Transverse colon (tissue), 4 donors: ENCODE measurements at regions of chr5 and their contacts with region 1.

Region 1: DNA sequence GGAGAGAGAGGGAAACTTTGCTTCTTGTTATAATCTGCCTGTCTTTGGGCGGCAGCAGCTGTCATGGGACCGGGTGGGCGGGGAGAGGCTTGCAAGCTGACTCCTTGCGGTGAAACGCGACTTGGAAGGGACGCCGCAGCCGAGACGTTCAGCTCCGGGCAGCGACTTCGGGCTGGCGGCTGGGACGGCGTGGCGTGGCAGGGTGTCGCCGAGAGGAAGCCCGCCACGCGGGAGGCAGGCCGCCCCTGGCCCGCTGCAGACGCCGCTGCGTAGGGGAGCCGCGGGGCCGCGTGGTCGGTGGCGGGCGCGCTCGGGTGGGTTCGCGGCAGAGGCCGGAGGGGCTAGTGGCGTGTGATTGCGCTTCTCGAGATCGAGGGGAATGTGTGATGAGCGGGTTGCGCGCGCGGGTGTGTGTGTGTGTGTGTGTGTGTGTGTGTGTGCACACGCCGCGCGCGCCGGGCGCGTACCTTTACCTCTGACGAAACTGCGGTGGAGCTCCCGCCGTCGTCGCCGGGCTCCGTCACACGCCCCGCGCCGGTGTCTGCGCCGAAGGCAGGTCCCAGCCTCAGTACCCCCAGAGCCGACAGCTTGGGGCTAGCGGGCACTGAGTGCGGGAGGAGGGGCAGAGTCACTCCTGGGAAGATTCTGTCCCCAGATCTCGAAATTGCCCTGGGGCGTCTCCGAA is 1.7 kb downstream of the PPARGC1B start:
- DNase-seq: peak; percentile 91
- H3K4me3 ChIP-seq: peak overlapping the region; percentile 86 to 98 (median 97)
- H3K27ac ChIP-seq: peak overlapping the region; percentile 92 to 99 (median 96)
- H3K4me1 ChIP-seq: peaks cover 10 to 54% (median 33%) of the 10 kb centered on the region in 4 donors
- H3K27me3 ChIP-seq: no peaks in the 10 kb centered on the region
- CTCF ChIP-seq: peak in 1 of 5 experiments; percentile 26
- EP300 ChIP-seq: no peak
- POLR2A ChIP-seq: peak; percentile 47

Region 2: DNA sequence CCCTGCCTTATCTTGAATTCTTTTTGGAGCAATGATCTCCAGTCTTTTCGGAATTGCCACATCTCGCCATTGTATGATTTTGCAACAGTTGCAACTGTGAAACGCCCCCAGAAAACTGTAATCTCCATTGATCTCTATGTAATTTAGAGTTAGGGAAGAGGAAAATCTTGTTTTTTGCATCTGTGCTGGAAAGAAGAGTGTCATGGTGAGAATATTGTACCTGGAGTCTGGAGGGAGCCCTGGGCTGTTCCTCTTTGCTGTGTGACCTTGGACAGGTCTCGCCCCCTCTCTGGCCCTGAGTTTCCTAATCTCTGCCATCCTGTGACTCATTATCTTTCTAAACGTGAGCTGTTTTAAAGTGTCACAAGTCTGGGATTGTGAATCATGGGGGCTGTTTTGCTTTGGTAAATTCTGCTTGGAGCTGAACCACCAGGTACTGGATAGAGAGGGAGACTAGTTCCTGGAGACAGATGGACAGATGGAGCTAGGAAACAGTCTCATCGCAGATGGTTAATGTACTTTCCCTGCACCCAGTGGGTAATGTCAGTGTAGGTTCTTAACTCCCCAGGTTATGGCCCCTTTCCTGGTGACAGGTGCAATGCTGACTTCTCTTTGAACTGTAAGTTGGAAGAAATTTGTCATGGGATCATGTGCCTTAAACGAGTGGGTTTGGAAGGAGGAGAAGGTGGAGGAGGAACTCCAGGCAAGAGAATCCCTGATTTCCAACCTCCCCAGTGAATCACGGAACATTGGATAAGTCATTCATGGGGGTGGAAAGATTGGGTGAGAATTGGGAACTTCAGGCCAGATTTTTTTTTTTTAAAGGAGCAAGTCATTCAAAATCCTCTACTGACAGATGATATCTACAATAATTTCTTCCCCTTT is 17.9 kb after region 1 on chr5:
- in situ Hi-C with region 1: no loop called
- intact Hi-C with region 1: no loop called
- DNase-seq: no peak
- H3K4me3 ChIP-seq: no peak overlapping the region
- H3K27ac ChIP-seq: peak overlapping the region; percentile 78 to 85 (median 81)
- H3K4me1 ChIP-seq: peaks cover 27 to 91% (median 49%) of the 10 kb centered on the region in 4 donors
- H3K27me3 ChIP-seq: no peaks in the 10 kb centered on the region
- CTCF ChIP-seq: no peak
- EP300 ChIP-seq: no peak
- POLR2A ChIP-seq: no peak

Region 3: GRCh38 chr5:149804478-149805450 is 73.0 kb after region 1 on chr5:
- in situ Hi-C with region 1: no loop called
- intact Hi-C with region 1: loop called (anchors 5 kb)
- DNase-seq: no peak
- H3K4me3 ChIP-seq: no peak overlapping the region
- H3K27ac ChIP-seq: peak overlapping the region; percentile 83 to 87 (median 84)
- H3K4me1 ChIP-seq: peaks cover 43 to 78% (median 59%) of the 10 kb centered on the region in 4 donors
- H3K27me3 ChIP-seq: no peaks in the 10 kb centered on the region
- CTCF ChIP-seq: no peak
- EP300 ChIP-seq: no peak
- POLR2A ChIP-seq: no peak

Region 4: DNA sequence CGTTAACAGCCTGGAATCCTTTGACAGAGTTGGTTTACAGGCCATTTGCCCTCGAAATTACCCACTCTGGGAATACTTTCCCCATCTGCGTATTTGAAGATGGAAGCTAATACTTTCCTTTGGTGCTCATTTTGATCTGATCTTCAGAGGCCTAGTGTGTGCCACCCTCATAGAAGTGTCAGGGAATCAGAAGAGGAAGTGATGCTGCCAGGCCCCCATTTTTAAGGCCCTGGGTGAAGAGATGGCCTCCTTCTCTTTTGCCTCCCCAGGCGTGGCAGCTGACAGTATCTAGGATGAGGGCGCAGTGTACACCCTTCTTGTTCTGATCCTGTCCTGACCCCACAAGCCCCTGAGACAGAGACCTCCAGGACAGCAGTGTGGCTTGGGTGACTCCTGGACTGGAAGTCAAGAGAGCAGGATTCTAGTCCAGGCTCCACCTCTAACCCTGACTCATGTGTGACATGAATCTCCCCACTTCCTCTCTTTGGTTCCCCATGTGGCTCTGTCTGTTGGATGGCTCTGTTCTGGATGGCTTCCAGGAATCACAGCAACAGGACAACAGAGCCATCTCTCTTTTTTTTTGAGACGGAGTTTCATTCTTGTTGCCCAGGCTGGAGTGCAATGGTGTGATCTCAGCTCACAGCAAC is 326.8 kb after region 1 on chr5:
- in situ Hi-C with region 1: no loop called
- intact Hi-C with region 1: no loop called
- DNase-seq: no peak
- H3K4me3 ChIP-seq: no peak overlapping the region
- H3K27ac ChIP-seq: no peak overlapping the region
- H3K4me1 ChIP-seq: no peaks in the 10 kb centered on the region
- H3K27me3 ChIP-seq: no peaks in the 10 kb centered on the region
- CTCF ChIP-seq: no peak
- EP300 ChIP-seq: no peak
- POLR2A ChIP-seq: no peak

Region 5: GRCh38 chr5:150092159-150092787 is 360.5 kb after region 1 on chr5:
- in situ Hi-C with region 1: no loop called
- intact Hi-C with region 1: no loop called
- DNase-seq: no peak
- H3K4me3 ChIP-seq: no peak overlapping the region
- H3K27ac ChIP-seq: no peak overlapping the region
- H3K4me1 ChIP-seq: no peaks in the 10 kb centered on the region
- H3K27me3 ChIP-seq: no peaks in the 10 kb centered on the region
- CTCF ChIP-seq: no peak
- EP300 ChIP-seq: no peak
- POLR2A ChIP-seq: no peak